HepG2 (cell line): ENCODE measurements at regions of chr17 and their contacts with region 1.

Region 1: GRCh38 chr17:41688699-41689496 is at the start of gene EIF1:
- DNase-seq: peak; percentile 100
- ATAC-seq: peak; percentile 82
- H3K4me3 ChIP-seq: peak within 1 kb of the TSS; percentile 88 to 99 (median 97)
- H3K27ac ChIP-seq: peak within 1 kb of the TSS; percentile 99
- H3K4me1 ChIP-seq: peaks cover 29% of the 10 kb centered on the region
- H3K27me3 ChIP-seq: no peaks in the 10 kb centered on the region; a peak in 2 of 5 replicates
- CTCF ChIP-seq: no peak; the same call in 1 of the 2 replicates
- EP300 ChIP-seq: peak; percentile 49 to 96
- POLR2A ChIP-seq: peak; percentile 95 to 98
- RAD21 ChIP-seq: peak; percentile 39; the same call in 1 of the 2 replicates
- total RNA-seq, gene EIF1: 147 and 199 TPM in 2 replicates

Region 2: GRCh38 chr17:40551879-40552768 is 1136.8 kb before region 1 on chr17:
- CTCF ChIA-PET with region 1: no interaction called
- POLR2A ChIA-PET with region 1: interaction called, 16 read pairs
- in situ Hi-C with region 1: no loop called
- intact Hi-C with region 1: no loop called
- DNase-seq: peak; percentile 95
- ATAC-seq: peak; percentile 58
- H3K4me3 ChIP-seq: peak overlapping the region in 2 of 3 experiments; percentile 6 to 52; a peak in 3 of 6 replicates
- H3K27ac ChIP-seq: peak overlapping the region; percentile 85
- H3K4me1 ChIP-seq: peaks cover 91% of the 10 kb centered on the region
- H3K27me3 ChIP-seq: no peaks in the 10 kb centered on the region
- CTCF ChIP-seq: peak; percentile 51
- EP300 ChIP-seq: peak in 1 of 2 experiments; percentile 95; a peak in 2 of 4 replicates
- POLR2A ChIP-seq: peak in 1 of 2 experiments; percentile 49; a peak in 1 of 4 replicates
- RAD21 ChIP-seq: no peak; the same call in 1 of the 2 replicates

Region 3: DNA sequence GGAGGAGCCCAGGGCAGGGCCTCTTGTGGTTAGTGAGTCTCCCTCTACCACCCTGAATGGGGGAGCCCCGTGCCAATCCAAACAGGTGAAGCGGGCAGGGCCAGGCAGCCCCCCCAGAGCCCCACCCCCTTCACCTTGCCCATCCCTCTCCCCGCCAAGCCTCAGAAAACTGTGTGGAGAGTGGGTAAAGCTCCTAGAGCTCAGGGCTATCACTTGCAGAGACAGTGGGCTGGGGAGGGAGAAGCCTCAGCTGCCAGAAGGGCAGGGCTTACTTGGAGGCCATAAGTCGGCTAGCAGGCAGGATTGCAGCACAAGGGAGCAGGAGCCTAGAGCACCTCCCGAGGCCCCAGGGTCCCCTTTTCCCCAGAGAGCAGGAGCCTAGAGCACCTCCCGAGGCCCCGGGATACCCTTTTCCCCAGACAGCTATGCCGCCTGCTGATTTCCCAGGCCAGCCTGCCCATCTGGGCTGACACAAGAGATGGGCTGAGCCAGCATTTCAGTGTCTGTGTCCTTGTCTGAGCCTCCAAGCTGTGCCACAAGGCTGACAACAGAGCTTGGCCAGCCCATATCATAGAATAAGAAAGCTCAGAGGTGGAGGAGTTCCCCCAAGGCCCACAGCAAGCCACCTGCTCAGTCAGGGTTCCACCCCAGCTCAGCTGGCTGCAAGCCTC is 95.5 kb before region 1 on chr17:
- CTCF ChIA-PET with region 1: no interaction called
- POLR2A ChIA-PET with region 1: no interaction called
- in situ Hi-C with region 1: no loop called
- intact Hi-C with region 1: no loop called
- DNase-seq: no peak
- ATAC-seq: no peak; the same call in 2 of the 3 replicates
- H3K4me3 ChIP-seq: no peak overlapping the region
- H3K27ac ChIP-seq: no peak overlapping the region
- H3K4me1 ChIP-seq: no peaks in the 10 kb centered on the region
- H3K27me3 ChIP-seq: peaks cover 4 to 42% of the 10 kb centered on the region in 2 experiments; a peak in 3 of 5 replicates
- CTCF ChIP-seq: no peak
- EP300 ChIP-seq: no peak
- POLR2A ChIP-seq: no peak
- RAD21 ChIP-seq: no peak

Region 4: DNA sequence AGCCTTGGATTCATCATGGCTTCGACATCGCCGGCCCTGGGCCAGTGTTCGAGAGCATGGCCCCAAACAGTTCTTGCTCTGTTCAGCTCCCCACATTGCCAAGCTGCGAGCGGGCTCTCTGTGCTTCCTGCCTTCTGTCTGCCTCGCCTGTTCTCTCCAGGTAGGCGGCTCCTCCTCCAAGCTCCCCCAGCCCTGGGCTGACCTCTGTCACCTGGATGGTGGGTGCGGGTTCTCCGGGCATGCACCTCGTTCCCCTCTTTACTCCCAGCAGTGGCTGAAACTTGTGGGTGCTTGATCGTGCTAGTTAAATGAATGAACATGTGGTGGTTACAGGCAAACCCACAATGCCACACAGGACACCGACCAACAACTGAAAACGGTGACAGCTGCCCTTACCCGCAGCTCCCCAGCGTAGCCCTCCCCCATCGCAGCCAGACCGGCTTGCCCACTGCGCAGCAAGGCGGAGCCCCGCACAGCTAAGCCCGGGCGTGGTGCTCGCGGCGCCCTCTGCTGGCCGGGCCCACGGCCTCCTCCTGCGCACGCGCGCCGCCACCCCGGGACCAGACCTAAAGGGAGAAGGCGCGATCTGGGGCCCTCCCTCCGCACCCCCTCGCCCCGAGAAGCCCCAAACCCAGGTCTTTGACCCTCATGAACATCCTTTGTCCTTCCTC is 23.2 kb before region 1 on chr17:
- CTCF ChIA-PET with region 1: interaction called, 5 read pairs
- POLR2A ChIA-PET with region 1: interaction called, 102 read pairs
- in situ Hi-C with region 1: no loop called
- intact Hi-C with region 1: loop called (anchors 1 kb)
- DNase-seq: peak; percentile 68
- ATAC-seq: peak; percentile 87
- H3K4me3 ChIP-seq: peak overlapping the region; percentile 54 to 80 (median 55)
- H3K27ac ChIP-seq: no peak overlapping the region
- H3K4me1 ChIP-seq: peaks cover 47% of the 10 kb centered on the region
- H3K27me3 ChIP-seq: peaks cover 0 to 16% of the 10 kb centered on the region in 2 experiments; a peak in 2 of 5 replicates
- CTCF ChIP-seq: peak; percentile 96
- EP300 ChIP-seq: no peak
- POLR2A ChIP-seq: peak in 1 of 2 experiments; percentile 66; a peak in 2 of 4 replicates
- RAD21 ChIP-seq: peak; percentile 54

Region 5: DNA sequence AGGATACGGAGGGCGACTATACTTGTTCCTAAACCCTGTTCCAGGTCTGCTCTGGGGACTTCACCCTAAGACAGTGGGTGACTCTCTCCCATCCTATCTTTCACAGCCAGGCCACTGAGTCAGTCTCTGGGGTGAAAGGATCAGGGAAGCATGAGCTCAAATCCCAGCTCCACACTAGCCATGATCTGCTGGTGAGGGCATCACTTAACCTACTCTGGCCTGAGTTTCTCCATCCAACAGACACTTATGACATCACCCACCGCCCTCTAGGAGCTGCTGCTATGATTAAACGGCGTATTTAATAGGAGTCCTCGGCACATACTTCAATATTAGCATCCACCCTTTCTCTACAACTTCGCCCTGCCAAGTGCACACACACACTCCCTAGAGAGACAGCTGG is 33.3 kb after region 1 on chr17:
- CTCF ChIA-PET with region 1: no interaction called
- POLR2A ChIA-PET with region 1: interaction called, 10 read pairs
- in situ Hi-C with region 1: no loop called
- intact Hi-C with region 1: no loop called
- DNase-seq: no peak
- ATAC-seq: no peak
- H3K4me3 ChIP-seq: no peak overlapping the region
- H3K27ac ChIP-seq: no peak overlapping the region
- H3K4me1 ChIP-seq: 0 out of 2 replicates have a peak, but pooled peaks cover 8% of the 10 kb centered on the region
- H3K27me3 ChIP-seq: peaks cover 10 to 64% of the 10 kb centered on the region in 2 experiments; a peak in 4 of 5 replicates
- CTCF ChIP-seq: no peak
- EP300 ChIP-seq: no peak
- POLR2A ChIP-seq: no peak
- RAD21 ChIP-seq: no peak

Region 6: DNA sequence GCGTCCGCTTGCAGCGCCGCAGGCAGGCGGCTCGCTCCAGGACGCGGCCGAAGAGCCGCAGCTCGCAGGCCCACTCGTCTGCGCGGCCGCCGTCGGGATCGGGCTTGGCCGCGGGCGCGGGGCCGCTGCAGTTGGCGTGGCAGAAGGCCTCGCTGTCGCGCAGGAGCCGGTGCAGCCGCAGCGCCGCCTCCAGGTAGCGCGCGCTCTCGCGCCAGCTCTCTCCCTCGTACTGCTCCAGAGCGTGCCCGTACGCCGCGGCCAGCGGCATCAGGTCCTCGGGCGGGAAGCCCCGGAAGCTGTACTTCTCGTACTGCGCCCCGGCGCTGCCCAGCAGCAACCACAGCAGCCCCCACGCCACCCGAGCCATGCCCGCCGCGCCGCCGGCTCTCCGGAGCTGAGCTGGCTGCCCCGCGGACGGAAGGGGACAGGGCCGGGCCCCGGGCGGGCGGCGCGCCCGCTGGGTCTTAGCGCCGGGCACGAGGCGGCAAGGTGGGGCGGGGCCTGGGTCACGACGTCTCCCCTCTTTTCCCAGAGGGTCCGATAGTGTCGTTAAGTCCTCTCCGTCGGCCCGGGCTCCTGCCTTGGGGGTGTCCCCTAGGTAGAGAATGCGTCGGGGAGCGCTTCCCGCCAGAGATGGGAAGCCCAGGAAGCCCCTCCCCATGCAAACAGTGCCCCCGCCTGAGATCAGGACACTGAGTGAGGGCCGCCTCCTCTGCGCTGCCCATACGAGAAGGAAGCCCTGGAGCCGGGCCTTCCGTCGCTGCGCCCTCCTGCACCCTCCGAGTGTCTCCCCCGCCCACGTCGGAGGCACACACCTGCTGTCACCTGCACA is 122.9 kb after region 1 on chr17 and contains the start of gene P3H4:
- CTCF ChIA-PET with region 1: no interaction called
- POLR2A ChIA-PET with region 1: interaction called, 22 read pairs
- in situ Hi-C with region 1: no loop called
- intact Hi-C with region 1: no loop called
- DNase-seq: peak; percentile 60
- ATAC-seq: peak; percentile 80
- H3K4me3 ChIP-seq: peak within 1 kb of the TSS; percentile 83 to 88 (median 87)
- H3K27ac ChIP-seq: peak within 1 kb of the TSS; percentile 82
- H3K4me1 ChIP-seq: peaks cover 60% of the 10 kb centered on the region
- H3K27me3 ChIP-seq: no peaks in the 10 kb centered on the region; a peak in 1 of 5 replicates
- CTCF ChIP-seq: peak; percentile 87
- EP300 ChIP-seq: peak; percentile 15 to 41; a peak in 1 of 4 replicates
- POLR2A ChIP-seq: peak; percentile 43 to 48; a peak in 2 of 4 replicates
- RAD21 ChIP-seq: peak; percentile 93
- total RNA-seq, gene P3H4: 13.5 and 37.1 TPM in 2 replicates

Region 7: DNA sequence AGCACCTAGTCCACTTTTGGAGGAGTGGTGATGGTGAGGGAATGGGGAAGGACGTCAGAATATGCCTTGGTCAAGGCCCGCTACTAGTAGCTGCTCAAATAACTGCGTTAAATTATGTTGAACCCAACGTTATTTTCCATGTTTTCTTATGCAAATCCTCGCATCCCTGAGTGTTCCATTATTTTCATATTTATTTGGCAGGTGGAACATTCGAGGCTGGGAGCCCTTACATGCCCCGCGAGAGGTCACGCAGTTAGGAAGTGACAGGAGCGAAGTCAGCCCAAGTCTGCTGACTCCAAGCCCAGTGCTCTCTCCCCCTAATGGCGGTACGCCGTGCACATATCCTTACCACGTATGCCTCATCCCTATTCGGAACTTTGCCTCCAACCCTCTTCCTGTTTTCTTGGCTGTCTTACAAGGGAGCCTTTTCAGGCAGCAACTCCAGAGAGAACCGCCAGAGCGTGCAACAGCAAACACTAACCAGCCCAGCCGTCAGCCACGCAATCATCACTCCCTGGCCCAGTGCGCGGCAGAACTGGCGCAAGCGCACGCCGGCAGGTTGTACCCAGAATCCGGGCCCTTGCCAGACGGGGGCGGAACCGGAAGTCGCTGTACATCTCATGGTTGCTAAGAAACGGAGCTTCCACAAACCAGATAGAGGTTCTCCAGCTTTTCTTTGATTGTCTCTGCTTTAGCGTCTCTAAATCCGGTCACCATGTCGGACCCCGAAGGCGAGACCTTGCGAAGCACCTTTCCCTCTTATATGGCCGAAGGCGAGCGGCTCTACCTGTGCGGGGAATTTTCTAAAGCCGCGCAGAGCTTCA is 241.3 kb after region 1 on chr17 and contains the start of gene ODAD4:
- CTCF ChIA-PET with region 1: no interaction called
- POLR2A ChIA-PET with region 1: interaction called, 15 read pairs
- in situ Hi-C with region 1: no loop called
- intact Hi-C with region 1: no loop called
- DNase-seq: peak; percentile 95
- ATAC-seq: peak; percentile 99
- H3K4me3 ChIP-seq: peak within 1 kb of the TSS; percentile 51 to 76 (median 70)
- H3K27ac ChIP-seq: peak within 1 kb of the TSS; percentile 62
- H3K4me1 ChIP-seq: peaks cover 42% of the 10 kb centered on the region
- H3K27me3 ChIP-seq: no peaks in the 10 kb centered on the region
- CTCF ChIP-seq: peak; percentile 85
- EP300 ChIP-seq: peak in 1 of 2 experiments; percentile 62; a peak in 1 of 4 replicates
- POLR2A ChIP-seq: peak; percentile 73 to 94
- RAD21 ChIP-seq: peak; percentile 90
- total RNA-seq, gene ODAD4: 0.53 and 0.60 TPM in 2 replicates